Activated CD8-positive, alpha-beta memory T cell treated with anti-CD3 and anti-CD28 coated beads, Interleukin-2, amount 10 ng/mL, durations not matched to agents 7 days and 5 days (primary cell): ENCODE measurements at regions of chr19 and their contacts with region 1.

Region 1: GRCh38 chr19:19203012-19203856 is at the start of gene NR2C2AP:
- DNase-seq: peak; percentile 95
- ATAC-seq: peak; percentile 95
- H3K4me3 Mint-ChIP-seq: peak within 1 kb of the TSS; percentile 93
- H3K27ac Mint-ChIP-seq: peak within 1 kb of the TSS; percentile 90
- H3K4me1 Mint-ChIP-seq: peaks cover 39% of the 10 kb centered on the region
- H3K27me3 Mint-ChIP-seq: no peaks in the 10 kb centered on the region
- total RNA-seq, gene NR2C2AP: 32.8 to 33.0 TPM

Region 2: DNA sequence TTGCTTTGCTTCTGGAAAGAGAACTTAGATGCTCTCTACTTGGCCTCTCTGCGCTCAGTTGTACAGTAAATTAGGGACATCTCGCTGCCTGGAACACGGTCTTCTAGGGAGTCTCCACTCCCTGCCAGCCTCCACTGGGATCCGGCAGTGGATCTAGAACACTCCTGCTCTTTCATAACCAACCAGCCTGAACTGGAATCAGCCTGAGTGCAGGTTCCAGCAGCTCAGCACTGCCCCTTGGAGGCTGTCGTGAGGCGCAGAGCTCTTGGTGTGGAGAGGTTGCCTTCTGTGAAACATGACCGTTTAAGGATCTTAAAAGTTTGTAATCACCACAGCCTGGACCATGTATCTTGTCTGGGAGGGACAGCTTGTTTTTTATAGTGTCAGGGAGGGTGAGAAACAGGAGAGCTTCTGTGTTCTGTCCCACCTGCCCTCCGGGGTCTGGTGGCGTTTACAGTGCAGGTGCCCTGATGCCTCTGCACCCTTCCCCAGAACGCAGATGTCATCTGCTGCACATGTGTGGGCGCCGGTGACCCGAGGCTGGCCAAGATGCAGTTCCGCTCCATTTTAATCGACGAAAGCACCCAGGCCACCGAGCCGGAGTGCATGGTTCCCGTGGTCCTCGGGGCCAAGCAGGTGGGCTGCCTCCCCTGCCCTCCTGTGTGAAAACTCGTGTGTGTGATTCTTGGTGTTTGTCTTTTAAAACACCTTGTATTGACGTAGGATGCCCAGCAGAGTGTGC is 346.7 kb before region 1 on chr19:
- CTCF ChIA-PET with region 1: no interaction called
- DNase-seq: no peak
- ATAC-seq: no peak
- H3K4me3 Mint-ChIP-seq: no peak overlapping the region
- H3K27ac Mint-ChIP-seq: no peak overlapping the region
- H3K4me1 Mint-ChIP-seq: peaks cover 3% of the 10 kb centered on the region
- H3K27me3 Mint-ChIP-seq: no peaks in the 10 kb centered on the region

Region 3: DNA sequence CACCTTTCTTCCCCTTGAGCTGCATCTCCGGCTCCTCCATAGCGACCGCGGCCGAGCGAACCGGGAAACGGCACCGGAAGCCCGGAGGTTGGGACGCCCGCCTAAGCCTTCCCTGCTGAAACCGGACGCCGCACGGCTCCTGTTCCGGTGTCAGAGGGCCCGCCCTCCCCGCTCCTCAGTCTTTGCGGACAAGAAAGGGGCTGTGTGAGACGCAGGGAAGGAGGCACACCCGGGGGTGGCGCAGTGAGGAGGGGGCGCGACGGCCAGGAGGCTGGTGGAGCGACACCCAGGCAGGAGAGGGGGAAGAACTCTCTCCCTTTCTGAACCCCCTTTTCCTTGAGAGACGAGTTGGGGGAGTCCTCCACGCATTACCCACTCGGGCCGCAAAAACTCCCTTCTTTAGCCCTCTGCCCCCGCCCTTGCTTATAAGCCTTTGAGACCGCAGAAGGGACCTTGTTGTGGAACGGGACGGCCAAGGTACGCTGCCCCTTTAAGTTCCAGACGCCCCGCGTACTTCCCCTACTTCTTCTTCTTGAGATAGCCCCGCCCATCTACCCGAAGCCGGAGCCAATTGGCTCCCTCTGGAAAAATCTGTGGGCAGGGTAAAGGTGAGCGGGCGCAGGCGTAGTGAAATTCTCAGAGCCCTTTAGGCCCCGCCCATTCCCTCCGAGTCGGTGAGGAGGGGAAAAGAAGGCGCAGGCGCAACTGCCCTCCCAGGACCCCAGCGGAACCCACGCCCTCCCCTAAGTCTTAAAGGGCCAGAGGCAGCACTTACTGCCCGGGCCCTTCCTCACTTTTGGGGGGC is 11.0 kb before region 1 on chr19 and contains the starts of genes BORCS8 and RFXANK:
- CTCF ChIA-PET with region 1: interaction called, 29 read pairs
- DNase-seq: peak; percentile 100
- ATAC-seq: peak; percentile 92
- H3K4me3 Mint-ChIP-seq: peak within 1 kb of the TSS; percentile 90
- H3K27ac Mint-ChIP-seq: peak within 1 kb of the TSS; percentile 98
- H3K4me1 Mint-ChIP-seq: peaks cover 34% of the 10 kb centered on the region
- H3K27me3 Mint-ChIP-seq: no peaks in the 10 kb centered on the region
- total RNA-seq, gene BORCS8: 33.1 to 34.8 TPM
- total RNA-seq, gene RFXANK: 110 to 121 TPM